Activated CD4-positive, alpha-beta T cell treated with anti-CD3 and anti-CD28 coated beads, Interleukin-2, amount 10 ng/mL, durations not matched to agents 7 days and 5 days (primary cell): ENCODE measurements at regions of chr3 and their contacts with region 1.

Region 1: GRCh38 chr3:42443819-42444436 is 33.5 kb upstream of the LYZL4 start:
- DNase-seq: peak; percentile 80
- H3K4me3 Mint-ChIP-seq: no peak overlapping the region
- H3K27ac Mint-ChIP-seq: no peak overlapping the region
- H3K4me1 Mint-ChIP-seq: no peaks in the 10 kb centered on the region
- H3K27me3 Mint-ChIP-seq: peaks cover 12% of the 10 kb centered on the region

Region 2: DNA sequence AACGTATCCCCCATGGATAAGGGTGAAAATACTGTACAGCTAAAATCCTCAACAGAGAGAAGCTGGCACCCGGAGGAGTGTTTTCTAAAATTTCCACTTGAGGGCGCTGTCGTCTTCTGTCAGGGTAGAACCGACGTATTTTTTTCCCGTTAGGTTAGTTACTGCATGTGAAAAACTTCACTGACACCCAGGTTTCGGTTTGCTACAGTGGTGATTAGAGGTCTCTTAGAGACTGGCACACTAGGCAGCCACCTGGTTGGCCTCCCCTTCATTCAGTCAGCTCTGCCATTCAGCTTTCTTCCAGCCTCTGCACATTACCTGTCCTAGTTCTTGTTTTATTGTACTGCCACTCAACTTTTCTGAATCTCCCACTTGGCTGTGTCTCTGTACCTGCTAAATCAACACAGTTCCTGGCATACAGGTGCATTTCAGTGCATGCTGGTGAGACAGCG is 196.3 kb before region 1 on chr3:
- CTCF ChIA-PET with region 1: interaction called, 14 read pairs
- POLR2A ChIA-PET with region 1: no interaction called
- DNase-seq: peak; percentile 72
- H3K4me3 Mint-ChIP-seq: no peak overlapping the region
- H3K27ac Mint-ChIP-seq: no peak overlapping the region
- H3K4me1 Mint-ChIP-seq: peaks cover 7% of the 10 kb centered on the region
- H3K27me3 Mint-ChIP-seq: peaks cover 33% of the 10 kb centered on the region